Tibial artery (tissue), 4 donors: ENCODE measurements at regions of chr17 and their contacts with region 1.

Region 1: GRCh38 chr17:5629128-5629527 is 44.8 kb upstream of the NLRP1 start:
- DNase-seq: no peak
- H3K4me3 ChIP-seq: no peak overlapping the region
- H3K27ac ChIP-seq: no peak overlapping the region
- H3K4me1 ChIP-seq: no peaks in the 10 kb centered on the region
- H3K27me3 ChIP-seq: peaks cover 0 to 17% of the 10 kb centered on the region in 2 donors
- CTCF ChIP-seq: no peak

Region 2: DNA sequence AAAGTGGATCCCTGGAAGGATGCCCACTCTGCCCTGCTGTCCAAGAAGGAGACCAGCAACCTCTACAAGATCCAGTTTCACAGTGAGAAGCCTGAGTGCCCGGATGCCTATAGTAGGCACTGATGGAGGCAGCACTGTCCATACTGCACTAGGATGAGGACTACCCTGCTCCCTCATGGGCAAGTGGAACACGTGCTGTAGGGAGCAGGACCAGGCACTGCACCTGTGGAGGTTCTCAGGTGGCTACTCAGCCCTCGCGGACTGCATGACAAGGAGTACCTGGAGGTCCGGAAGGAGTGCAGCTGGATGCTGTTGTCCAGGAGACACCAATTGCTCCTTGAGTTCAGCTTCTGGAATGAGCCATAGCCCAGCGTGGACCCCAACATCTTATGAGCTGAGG is 101.2 kb after region 1 on chr17:
- intact Hi-C with region 1: no loop called
- DNase-seq: no peak
- H3K4me3 ChIP-seq: no peak overlapping the region
- H3K27ac ChIP-seq: no peak overlapping the region
- H3K4me1 ChIP-seq: no peaks in the 10 kb centered on the region
- H3K27me3 ChIP-seq: peaks cover 0 to 6% of the 10 kb centered on the region in 2 donors
- CTCF ChIP-seq: no peak

Region 3: DNA sequence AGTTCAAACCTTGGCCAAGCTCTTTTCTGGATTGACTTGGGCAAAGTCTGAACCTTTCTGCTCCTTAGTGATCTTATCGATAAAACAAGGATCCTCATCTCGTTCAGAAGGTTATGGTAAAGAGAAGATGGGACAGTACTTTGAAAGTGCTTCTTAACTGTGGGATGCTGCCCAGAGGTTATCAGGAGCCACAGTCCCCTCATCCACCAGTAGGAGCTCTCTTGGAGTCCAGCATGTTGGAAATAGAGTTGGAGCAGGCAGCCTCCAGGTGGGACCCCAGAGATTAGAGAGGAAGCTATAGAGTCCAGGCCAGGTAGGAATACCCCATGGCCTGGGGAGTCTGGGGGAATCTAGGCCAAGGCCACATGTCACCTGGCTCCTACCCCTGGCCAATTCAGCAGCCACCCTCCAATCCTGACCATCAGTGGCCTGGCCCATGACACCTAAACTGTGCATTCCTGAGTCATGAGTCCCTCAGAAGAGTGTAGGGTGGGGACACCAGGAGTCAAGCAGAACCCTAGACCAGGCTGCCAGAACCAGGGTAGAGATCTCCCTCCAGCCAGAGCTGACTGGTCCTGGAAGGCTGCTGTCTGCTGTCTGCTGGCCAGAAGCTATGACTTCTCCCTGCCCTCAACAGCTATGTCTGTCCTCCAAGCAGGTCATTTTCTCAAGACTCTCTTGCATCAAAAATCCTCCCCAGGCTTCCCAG is 661.5 kb after region 1 on chr17:
- intact Hi-C with region 1: loop called (anchors 10 kb)
- DNase-seq: no peak
- H3K4me3 ChIP-seq: no peak overlapping the region
- H3K27ac ChIP-seq: no peak overlapping the region
- H3K4me1 ChIP-seq: no peaks in the 10 kb centered on the region
- H3K27me3 ChIP-seq: peaks cover 0 to 11% of the 10 kb centered on the region in 2 donors
- CTCF ChIP-seq: no peak